Gastrocnemius medialis (tissue), 4 donors: ENCODE measurements at regions of chr2 and their contacts with region 1.

Region 1: GRCh38 chr2:85288244-85288725 is 39.5 kb downstream of the TGOLN2 start:
- DNase-seq: no peak
- ATAC-seq: no peak
- H3K4me3 ChIP-seq: no peak overlapping the region
- H3K27ac ChIP-seq: no peak overlapping the region
- H3K4me1 ChIP-seq: no peaks in the 10 kb centered on the region
- H3K27me3 ChIP-seq: no peaks in the 10 kb centered on the region
- CTCF ChIP-seq: no peak
- POLR2A ChIP-seq: no peak

Region 2: GRCh38 chr2:85066874-85067351 is 221.4 kb before region 1 on chr2:
- in situ Hi-C with region 1: loop called (anchors 5 to 10 kb)
- intact Hi-C with region 1: loop called (anchors 5 kb)
- DNase-seq: peak; percentile 33 to 59
- ATAC-seq: peak; percentile 60 to 81
- H3K4me3 ChIP-seq: peak overlapping the region; percentile 41 to 48 (median 43)
- H3K27ac ChIP-seq: no peak overlapping the region
- H3K4me1 ChIP-seq: peaks cover 5 to 8% of the 10 kb centered on the region in 2 donors
- H3K27me3 ChIP-seq: peaks cover 0 to 3% (median 0%) of the 10 kb centered on the region in 3 donors
- CTCF ChIP-seq: peak; percentile 67 to 85 (median 78)
- POLR2A ChIP-seq: no peak

Region 3: DNA sequence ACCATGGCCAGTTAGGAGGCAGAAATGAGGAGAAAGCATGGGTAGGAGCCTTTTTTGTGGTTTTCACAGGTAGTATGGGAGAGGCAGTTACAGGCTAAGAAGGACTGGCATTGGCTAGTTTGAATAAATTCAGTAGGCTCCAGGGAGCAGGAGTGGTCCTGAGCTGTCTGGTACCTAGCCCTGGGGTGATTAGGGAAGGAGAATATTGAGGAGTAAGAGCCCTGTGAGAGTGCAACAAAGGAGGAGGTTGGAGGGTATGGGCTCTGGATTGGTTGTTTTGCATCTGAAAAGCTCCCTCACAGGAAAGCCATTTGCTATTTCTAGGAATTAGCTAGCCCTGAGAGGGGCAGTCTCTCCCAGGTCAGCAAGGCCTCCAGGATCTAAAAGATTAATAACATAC is 168.4 kb before region 1 on chr2:
- in situ Hi-C with region 1: loop called in 2 of 4 experiments (anchors 5 to 10 kb)
- intact Hi-C with region 1: no loop called
- DNase-seq: no peak
- ATAC-seq: no peak
- H3K4me3 ChIP-seq: no peak overlapping the region
- H3K27ac ChIP-seq: no peak overlapping the region
- H3K4me1 ChIP-seq: no peaks in the 10 kb centered on the region
- H3K27me3 ChIP-seq: no peaks in the 10 kb centered on the region
- CTCF ChIP-seq: no peak
- POLR2A ChIP-seq: no peak

Region 4: DNA sequence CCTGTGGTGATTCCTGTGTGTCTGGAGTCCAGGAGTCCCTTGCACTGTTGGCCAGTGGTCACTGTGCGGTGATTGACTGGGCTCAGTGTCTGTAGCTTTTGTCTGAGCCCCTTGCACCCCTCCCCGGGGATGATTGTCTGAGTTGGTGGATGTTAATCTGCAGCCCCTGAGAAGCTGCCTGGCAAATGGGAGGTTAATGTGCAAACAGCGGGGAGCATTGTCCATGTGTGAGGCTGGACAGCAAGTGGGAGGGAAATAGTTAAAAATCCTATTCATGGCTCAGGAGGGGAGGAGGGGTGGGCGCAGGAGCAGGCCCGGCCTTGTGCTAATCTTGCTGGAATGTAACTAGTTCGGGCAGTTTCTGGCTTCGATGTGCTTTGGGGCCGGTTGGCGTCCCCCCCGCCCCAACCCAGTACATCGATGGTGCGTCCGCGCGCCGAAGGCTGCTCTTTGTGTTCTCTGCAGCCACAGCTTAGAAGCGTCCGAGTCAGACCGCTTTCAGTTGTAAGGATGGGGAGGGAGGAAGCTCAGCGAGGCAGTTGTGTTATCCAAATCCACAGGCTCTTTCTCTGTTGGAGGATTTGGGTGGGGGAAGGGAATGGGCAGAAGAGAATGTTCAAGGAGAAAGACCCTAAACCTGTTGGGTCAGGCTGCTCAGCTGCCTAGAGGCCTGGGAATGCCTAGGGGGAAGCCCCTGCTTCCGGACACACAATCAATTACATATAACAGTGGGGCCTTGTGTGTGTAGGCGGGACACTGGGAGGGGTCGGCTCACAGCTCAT is 32.3 kb before region 1 on chr2:
- in situ Hi-C with region 1: no loop called
- intact Hi-C with region 1: no loop called
- DNase-seq: no peak
- ATAC-seq: no peak
- H3K4me3 ChIP-seq: no peak overlapping the region
- H3K27ac ChIP-seq: peak overlapping the region; percentile 18 to 54 (median 48)
- H3K4me1 ChIP-seq: peaks cover 43 to 51% of the 10 kb centered on the region in 2 donors
- H3K27me3 ChIP-seq: no peaks in the 10 kb centered on the region
- CTCF ChIP-seq: no peak
- POLR2A ChIP-seq: no peak

Region 5: DNA sequence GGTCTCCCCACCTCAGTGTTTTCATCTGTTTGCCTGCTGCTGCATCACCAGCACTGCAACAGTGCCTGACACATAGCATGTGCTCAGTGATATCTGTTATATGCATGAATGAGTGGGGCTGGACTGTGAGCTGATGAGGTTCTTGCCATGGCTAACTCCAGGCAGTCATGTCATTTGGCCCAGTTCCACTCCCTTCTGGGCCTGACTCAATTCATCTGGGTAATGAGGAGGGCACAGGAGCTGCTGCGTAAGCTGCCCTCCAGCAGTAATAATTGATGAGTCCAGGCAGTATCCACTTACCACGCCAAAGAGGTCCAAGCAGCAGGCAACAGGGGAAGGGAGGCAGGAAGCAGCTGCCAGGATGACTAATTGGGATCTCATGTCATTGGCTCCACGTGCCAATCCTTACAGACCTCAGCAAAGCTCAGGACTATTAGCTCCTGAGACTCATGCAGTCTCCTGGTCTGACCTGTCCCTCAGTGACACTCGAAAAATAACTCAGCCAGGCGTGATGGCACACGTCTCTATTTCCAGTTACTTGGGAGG is 216.6 kb after region 1 on chr2:
- in situ Hi-C with region 1: no loop called
- intact Hi-C with region 1: no loop called
- DNase-seq: peak; percentile 89 to 92
- ATAC-seq: peak; percentile 94 to 95
- H3K4me3 ChIP-seq: no peak overlapping the region
- H3K27ac ChIP-seq: peak overlapping the region; percentile 74 to 90 (median 81)
- H3K4me1 ChIP-seq: peaks cover 19 to 34% of the 10 kb centered on the region in 2 donors
- H3K27me3 ChIP-seq: no peaks in the 10 kb centered on the region
- CTCF ChIP-seq: no peak
- POLR2A ChIP-seq: no peak